ENCODE measurements at regions of chr4 and their contacts with region 1.

Region 1: DNA sequence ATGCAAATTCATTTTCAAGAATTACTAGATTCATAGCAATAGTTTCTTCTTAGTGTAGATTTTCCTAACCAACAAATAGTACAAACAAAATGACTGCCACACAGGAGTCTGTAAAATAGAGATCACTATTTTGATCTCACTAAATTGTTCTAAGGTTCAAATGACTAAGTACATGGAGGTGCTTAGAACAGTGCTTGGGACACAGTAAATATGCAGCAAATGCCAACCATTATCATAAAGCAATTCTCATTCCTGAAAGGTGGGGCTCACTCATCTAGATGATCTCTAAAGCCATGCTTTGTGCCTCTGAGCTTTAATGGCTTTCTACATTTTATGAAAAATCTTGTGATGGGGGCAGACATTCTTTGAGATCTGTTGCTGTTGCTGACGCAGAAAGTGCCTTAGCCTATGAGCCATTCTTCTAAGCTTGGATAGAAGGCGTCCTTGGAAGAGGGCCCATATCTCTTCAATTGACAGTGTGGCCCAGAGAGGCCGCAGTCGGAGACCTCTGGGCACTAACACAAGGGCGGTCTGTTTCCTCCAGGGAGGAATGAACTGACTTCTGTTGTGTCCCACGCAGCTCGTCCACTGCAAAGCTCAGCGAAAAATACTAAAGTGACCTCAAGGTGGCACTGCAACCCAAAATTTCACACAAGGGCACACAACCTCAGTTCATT is 23.5 kb downstream of the TLR10 start:
- DNase-seq: peak; percentile 80
- ATAC-seq: peak; percentile 95
- H3K4me3 ChIP-seq: no peak overlapping the region
- H3K27ac ChIP-seq: no peak overlapping the region
- H3K4me1 ChIP-seq: no peaks in the 10 kb centered on the region
- H3K27me3 ChIP-seq: no peaks in the 10 kb centered on the region
- CTCF ChIP-seq: peak; percentile 83
- POLR2A ChIP-seq: no peak
- RAD21 ChIP-seq: peak; percentile 83

Region 2: GRCh38 chr4:38582889-38583470 is 176.3 kb before region 1 on chr4:
- CTCF ChIA-PET with region 1: no interaction called
- POLR2A ChIA-PET with region 1: no interaction called
- dilution Hi-C with region 1: no loop called
- in situ Hi-C with region 1: no loop called
- intact Hi-C with region 1: no loop called
- DNase-seq: no peak
- ATAC-seq: no peak
- H3K4me3 ChIP-seq: no peak overlapping the region
- H3K27ac ChIP-seq: no peak overlapping the region
- H3K4me1 ChIP-seq: no peaks in the 10 kb centered on the region
- H3K27me3 ChIP-seq: peaks cover 20% of the 10 kb centered on the region
- CTCF ChIP-seq: no peak
- POLR2A ChIP-seq: no peak
- RAD21 ChIP-seq: no peak

Region 3: DNA sequence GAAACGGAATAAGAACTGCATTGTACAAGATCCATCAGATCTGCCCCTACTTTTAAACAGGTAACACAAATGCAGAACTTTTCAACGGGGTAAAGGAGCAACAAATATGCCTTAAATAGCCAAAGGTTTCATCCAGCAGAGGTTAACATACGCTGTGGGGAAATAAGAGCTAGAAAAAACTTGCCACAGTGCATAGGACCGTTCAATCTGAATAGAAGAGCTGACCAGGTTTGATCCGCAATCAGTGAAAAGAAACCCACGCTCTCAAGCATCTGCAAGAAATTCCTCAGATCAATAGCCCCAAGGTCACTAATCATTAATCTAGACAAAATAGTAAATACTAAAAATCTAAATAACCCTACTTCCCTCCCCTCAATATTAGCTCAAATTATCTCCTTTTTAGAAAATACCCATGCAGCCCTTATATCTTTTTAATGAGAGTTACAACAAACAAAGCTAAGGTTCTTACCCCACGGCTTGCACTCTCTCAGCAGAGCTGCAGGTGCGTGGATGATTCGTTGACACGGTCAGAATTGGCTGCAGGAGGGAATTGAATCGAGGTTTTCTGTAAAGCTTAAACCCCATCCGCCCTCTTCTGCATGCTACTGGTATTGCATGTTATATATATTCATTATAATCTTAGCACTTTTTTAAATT is 23.3 kb after region 1 on chr4 and contains the start of gene TLR10:
- CTCF ChIA-PET with region 1: interaction called, 10 read pairs
- POLR2A ChIA-PET with region 1: no interaction called
- dilution Hi-C with region 1: no loop called
- in situ Hi-C with region 1: no loop called
- intact Hi-C with region 1: no loop called
- DNase-seq: peak; percentile 52
- ATAC-seq: peak; percentile 81
- H3K4me3 ChIP-seq: no peak within 1 kb of the TSS
- H3K27ac ChIP-seq: no peak within 1 kb of the TSS
- H3K4me1 ChIP-seq: no peaks in the 10 kb centered on the region
- H3K27me3 ChIP-seq: peaks cover 4% of the 10 kb centered on the region
- CTCF ChIP-seq: peak; percentile 66
- POLR2A ChIP-seq: no peak
- RAD21 ChIP-seq: peak; percentile 64
- total RNA-seq, gene TLR10: not detected in 2 replicates

Measured in IMR-90 (cell line).